Activated CD4-positive, alpha-beta T cell treated with anti-CD3 and anti-CD28 coated beads for 36 hours (primary cell): ENCODE measurements at regions of chr17 and their contacts with region 1.

Region 1: GRCh38 chr17:32877164-32877764 is 340 bp upstream of the MYO1D start:
- DNase-seq: peak; percentile 96
- ATAC-seq: peak; percentile 98
- H3K4me3 Mint-ChIP-seq: peak overlapping the region; percentile 66
- H3K27ac Mint-ChIP-seq: peak overlapping the region; percentile 72
- H3K4me1 Mint-ChIP-seq: peaks cover 25% of the 10 kb centered on the region
- H3K27me3 Mint-ChIP-seq: peaks cover 2% of the 10 kb centered on the region

Region 2: GRCh38 chr17:32142038-32142856 is 735.0 kb before region 1 on chr17 and contains the start of gene RHOT1:
- CTCF ChIA-PET with region 1: interaction called, 3 read pairs
- POLR2A ChIA-PET with region 1: no interaction called
- intact Hi-C with region 1: loop called in 1 of 2 experiments (anchors 2 kb)
- DNase-seq: peak; percentile 85
- ATAC-seq: peak; percentile 64
- H3K4me3 Mint-ChIP-seq: peak within 1 kb of the TSS; percentile 99
- H3K27ac Mint-ChIP-seq: peak within 1 kb of the TSS; percentile 67
- H3K4me1 Mint-ChIP-seq: peaks cover 27% of the 10 kb centered on the region
- H3K27me3 Mint-ChIP-seq: no peaks in the 10 kb centered on the region
- total RNA-seq, gene RHOT1: 23.3 to 34.1 TPM

Region 3: GRCh38 chr17:32461853-32462617 is 415.2 kb before region 1 on chr17:
- CTCF ChIA-PET with region 1: interaction called, 8 read pairs
- POLR2A ChIA-PET with region 1: no interaction called
- intact Hi-C with region 1: loop called in 1 of 2 experiments (anchors 1 kb)
- DNase-seq: peak; percentile 83
- ATAC-seq: peak; percentile 79
- H3K4me3 Mint-ChIP-seq: no peak overlapping the region
- H3K27ac Mint-ChIP-seq: peak overlapping the region; percentile 56
- H3K4me1 Mint-ChIP-seq: peaks cover 33% of the 10 kb centered on the region
- H3K27me3 Mint-ChIP-seq: no peaks in the 10 kb centered on the region

Region 4: DNA sequence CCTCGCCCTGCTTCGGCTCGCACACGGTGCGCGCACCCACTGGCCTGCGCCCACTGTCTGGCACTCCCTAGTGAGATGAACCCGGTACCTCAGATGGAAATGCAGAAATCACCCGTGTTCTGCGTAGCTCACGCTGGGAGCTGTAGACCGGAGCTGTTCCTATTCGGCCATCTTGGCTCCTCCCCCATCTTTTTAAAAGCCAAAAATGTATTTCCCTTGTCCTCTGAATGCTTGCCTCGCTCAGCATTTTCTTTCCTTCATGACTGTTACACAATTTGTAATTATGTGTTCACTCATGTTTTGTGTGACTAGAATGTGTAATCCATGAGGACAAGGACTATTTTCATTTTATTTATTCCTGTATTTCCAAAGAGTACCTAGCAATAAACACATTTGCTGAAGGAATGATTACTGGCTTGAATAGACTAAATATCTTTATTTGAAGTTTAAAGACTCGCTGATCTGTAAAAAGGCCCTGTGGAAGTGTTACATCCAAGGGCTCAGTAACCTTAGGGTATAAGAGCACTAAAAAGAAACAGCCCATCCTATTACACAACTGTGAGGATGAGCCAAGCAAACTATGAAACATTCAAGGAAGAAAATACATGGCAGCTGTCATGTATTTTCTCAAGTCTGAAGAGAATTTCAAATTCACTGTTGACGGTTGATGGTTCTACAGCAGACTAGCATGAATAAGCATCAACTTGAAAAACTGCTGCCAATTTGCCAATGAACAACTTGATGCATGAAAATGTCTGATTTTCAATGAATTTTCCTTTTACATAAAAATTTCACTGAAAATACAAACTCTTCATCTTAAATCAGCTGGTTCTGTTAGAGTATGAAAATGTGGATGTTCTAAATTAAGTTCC is 192.9 kb before region 1 on chr17:
- CTCF ChIA-PET with region 1: no interaction called
- POLR2A ChIA-PET with region 1: no interaction called
- intact Hi-C with region 1: no loop called
- DNase-seq: no peak
- ATAC-seq: no peak
- H3K4me3 Mint-ChIP-seq: no peak overlapping the region
- H3K27ac Mint-ChIP-seq: no peak overlapping the region
- H3K4me1 Mint-ChIP-seq: no peaks in the 10 kb centered on the region
- H3K27me3 Mint-ChIP-seq: no peaks in the 10 kb centered on the region

Region 5: DNA sequence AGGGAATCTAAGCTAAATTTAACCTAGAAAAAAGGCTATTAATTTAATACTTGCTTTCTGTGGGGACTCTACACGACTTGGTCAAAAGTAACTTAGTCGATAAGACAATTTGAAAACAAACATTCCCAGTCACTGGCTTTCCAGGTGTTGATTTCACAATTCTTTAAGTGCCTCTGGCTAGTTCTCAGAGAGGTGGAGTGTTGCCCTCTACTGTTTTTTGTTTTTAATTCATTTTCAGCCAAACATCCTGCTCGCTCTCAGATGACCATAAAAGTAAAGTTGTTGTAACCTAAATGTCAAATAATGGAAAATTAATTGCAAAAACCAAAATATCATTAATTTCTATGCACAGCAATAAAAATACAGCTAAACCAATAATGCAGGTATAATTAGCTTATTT is 107.4 kb before region 1 on chr17:
- CTCF ChIA-PET with region 1: interaction called, 11 read pairs
- POLR2A ChIA-PET with region 1: no interaction called
- intact Hi-C with region 1: no loop called
- DNase-seq: no peak
- ATAC-seq: no peak
- H3K4me3 Mint-ChIP-seq: no peak overlapping the region
- H3K27ac Mint-ChIP-seq: no peak overlapping the region
- H3K4me1 Mint-ChIP-seq: no peaks in the 10 kb centered on the region
- H3K27me3 Mint-ChIP-seq: no peaks in the 10 kb centered on the region

Region 6: GRCh38 chr17:32894245-32894644 is 17.0 kb after region 1 on chr17:
- CTCF ChIA-PET with region 1: interaction called, 12 read pairs
- POLR2A ChIA-PET with region 1: no interaction called
- intact Hi-C with region 1: no loop called
- DNase-seq: no peak
- ATAC-seq: no peak
- H3K4me3 Mint-ChIP-seq: no peak overlapping the region
- H3K27ac Mint-ChIP-seq: no peak overlapping the region
- H3K4me1 Mint-ChIP-seq: no peaks in the 10 kb centered on the region
- H3K27me3 Mint-ChIP-seq: peaks cover 11% of the 10 kb centered on the region

Region 7: DNA sequence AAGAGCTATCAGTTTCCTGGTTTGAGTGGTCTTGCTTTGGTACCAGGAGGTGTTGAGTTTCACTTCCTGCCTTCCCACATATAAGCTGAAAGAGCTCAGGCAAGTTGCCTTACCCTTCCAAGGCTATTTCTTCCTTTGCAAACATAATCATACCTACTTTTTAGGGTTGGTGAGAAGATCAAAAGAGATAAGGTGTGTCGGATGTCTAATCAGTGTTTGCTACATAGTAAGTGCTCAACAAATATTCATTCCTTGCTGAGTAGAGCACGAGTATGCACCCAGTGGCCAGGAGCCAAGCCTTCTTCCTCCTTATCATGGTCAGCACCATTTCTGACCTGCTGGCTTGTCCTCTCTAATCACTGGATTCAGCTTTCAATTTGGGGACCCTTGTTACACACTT is 38.0 kb after region 1 on chr17:
- CTCF ChIA-PET with region 1: interaction called, 17 read pairs
- POLR2A ChIA-PET with region 1: no interaction called
- intact Hi-C with region 1: loop called (anchors 1 kb)
- DNase-seq: no peak
- ATAC-seq: no peak
- H3K4me3 Mint-ChIP-seq: no peak overlapping the region
- H3K27ac Mint-ChIP-seq: no peak overlapping the region
- H3K4me1 Mint-ChIP-seq: peaks cover 17% of the 10 kb centered on the region
- H3K27me3 Mint-ChIP-seq: peaks cover 8% of the 10 kb centered on the region

Region 8: GRCh38 chr17:33500151-33500550 is 622.9 kb after region 1 on chr17:
- CTCF ChIA-PET with region 1: no interaction called
- POLR2A ChIA-PET with region 1: no interaction called
- intact Hi-C with region 1: no loop called
- DNase-seq: no peak
- ATAC-seq: no peak
- H3K4me3 Mint-ChIP-seq: no peak overlapping the region
- H3K27ac Mint-ChIP-seq: no peak overlapping the region
- H3K4me1 Mint-ChIP-seq: no peaks in the 10 kb centered on the region
- H3K27me3 Mint-ChIP-seq: peaks cover 11% of the 10 kb centered on the region